Activated T-helper 2 cell treated with anti-CD3 and anti-CD28 coated beads, Interferon-gamma antibody, Interleukin-2, Interleukin-4, amounts not matched to agents 10 μg/mL and 5 μg/mL and 100 μg/mL, durations not matched to agents 14 hours and 24 hours and 36 hours (primary cell): ENCODE measurements at regions of chr2 and their contacts with region 1.

Region 1: DNA sequence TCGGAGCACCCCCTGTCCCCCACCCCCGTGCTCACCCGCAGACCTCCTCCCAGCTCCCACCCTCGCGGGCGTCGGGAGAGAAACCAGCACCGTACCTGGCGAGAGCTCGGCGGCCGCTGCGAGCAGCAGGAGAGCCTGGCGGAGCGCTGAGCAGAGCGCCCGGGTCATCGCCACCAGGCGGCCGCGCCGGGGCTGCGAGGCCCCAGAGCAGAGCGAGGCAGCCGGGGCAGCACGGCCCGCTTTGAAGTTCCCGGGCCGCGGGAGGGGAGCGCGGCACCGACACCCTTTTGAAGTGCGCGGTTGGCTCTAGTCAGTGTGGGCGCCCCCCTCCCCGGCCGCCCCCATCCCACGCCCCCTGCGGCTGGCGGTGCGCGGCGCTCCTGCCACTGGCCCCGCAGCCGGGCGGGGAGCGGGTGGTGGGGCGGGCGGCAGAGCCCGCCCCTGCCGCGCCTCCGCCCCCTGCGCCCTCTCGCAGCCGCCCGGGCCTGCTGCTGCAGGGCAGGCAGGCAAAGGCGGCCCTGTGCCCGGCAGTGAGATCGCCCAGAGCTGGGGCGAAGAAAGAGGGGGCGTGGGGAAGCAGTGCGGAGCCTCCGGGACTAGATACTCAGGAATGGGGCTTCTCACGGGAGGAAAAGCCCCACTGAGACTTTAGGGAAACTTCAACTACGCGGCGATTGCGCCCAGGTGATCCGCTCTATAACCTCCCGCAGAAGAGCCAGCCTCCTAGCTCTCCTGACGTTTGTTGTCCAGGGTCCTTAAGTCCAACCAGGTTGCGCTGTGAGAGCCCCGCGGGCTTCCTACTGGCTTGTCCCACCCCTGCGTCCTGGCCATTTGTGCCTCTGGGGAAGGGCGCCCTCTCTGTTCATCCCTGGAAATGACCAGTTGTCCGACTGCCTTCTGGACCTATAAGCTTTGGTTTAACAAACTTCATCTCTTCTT is at the start of gene ACVR1C:
- DNase-seq: peak; percentile 65
- H3K4me3 Mint-ChIP-seq: peak within 1 kb of the TSS; percentile 83
- H3K27ac Mint-ChIP-seq: no peak within 1 kb of the TSS
- H3K4me1 Mint-ChIP-seq: peaks cover 22% of the 10 kb centered on the region
- H3K27me3 Mint-ChIP-seq: peaks cover 15% of the 10 kb centered on the region
- total RNA-seq, gene ACVR1C: 0.57 and 0.94 TPM in 2 replicates

Region 2: GRCh38 chr2:157302492-157303099 is 326.1 kb before region 1 on chr2:
- intact Hi-C with region 1: loop called (anchors 10 kb)
- DNase-seq: no peak
- H3K4me3 Mint-ChIP-seq: no peak overlapping the region
- H3K27ac Mint-ChIP-seq: no peak overlapping the region
- H3K4me1 Mint-ChIP-seq: peaks cover 16% of the 10 kb centered on the region
- H3K27me3 Mint-ChIP-seq: peaks cover 10% of the 10 kb centered on the region

Region 3: GRCh38 chr2:157492189-157492773 is 136.5 kb before region 1 on chr2:
- intact Hi-C with region 1: loop called (anchors 10 kb)
- DNase-seq: peak; percentile 56
- H3K4me3 Mint-ChIP-seq: no peak overlapping the region
- H3K27ac Mint-ChIP-seq: no peak overlapping the region
- H3K4me1 Mint-ChIP-seq: peaks cover 47% of the 10 kb centered on the region
- H3K27me3 Mint-ChIP-seq: no peaks in the 10 kb centered on the region

Region 4: DNA sequence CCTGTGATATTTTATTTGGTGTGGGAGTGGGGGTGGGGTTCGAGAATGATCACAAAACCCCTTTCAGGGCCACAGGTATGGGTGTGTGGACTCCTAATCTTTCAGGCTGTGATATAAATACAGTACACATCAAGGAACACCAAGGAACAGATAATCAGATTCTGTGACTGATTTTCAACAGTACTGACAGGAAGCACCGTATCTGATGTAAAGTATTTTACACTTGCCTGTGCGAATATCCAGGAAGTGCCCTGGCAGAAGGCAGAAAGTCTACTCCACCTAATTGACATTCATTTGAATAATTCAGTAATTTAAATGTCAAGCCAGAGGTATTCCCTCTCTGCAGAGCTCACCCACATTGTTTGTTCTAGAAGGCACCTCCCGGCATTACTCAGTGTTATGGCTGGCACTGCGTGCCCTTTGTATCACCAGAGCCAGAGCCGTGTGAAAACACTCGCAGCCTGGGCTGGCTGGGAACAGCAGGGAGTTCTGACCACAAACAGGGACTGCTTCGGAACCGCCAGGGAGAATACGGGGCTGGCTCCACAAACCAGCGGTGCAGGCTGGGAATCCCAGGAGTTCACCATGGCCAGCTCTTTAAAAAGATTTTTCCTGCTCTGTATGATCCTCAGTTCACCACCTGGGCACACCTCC is 155.6 kb after region 1 on chr2:
- intact Hi-C with region 1: loop called (anchors 2 kb)
- DNase-seq: no peak
- H3K4me3 Mint-ChIP-seq: no peak overlapping the region
- H3K27ac Mint-ChIP-seq: peak overlapping the region; percentile 74
- H3K4me1 Mint-ChIP-seq: peaks cover 69% of the 10 kb centered on the region
- H3K27me3 Mint-ChIP-seq: no peaks in the 10 kb centered on the region

Region 5: GRCh38 chr2:158006961-158007719 is 378.4 kb after region 1 on chr2:
- intact Hi-C with region 1: loop called (anchors 2 kb)
- DNase-seq: no peak
- H3K4me3 Mint-ChIP-seq: no peak overlapping the region
- H3K27ac Mint-ChIP-seq: no peak overlapping the region
- H3K4me1 Mint-ChIP-seq: peaks cover 15% of the 10 kb centered on the region
- H3K27me3 Mint-ChIP-seq: no peaks in the 10 kb centered on the region